GM10248 (cell line): ENCODE measurements at regions of chr15 and their contacts with region 1.

Region 1: GRCh38 chr15:52912169-52912568 is 122.0 kb upstream of the ONECUT1 start:
- DNase-seq: no peak
- CTCF ChIP-seq: no peak

Region 2: DNA sequence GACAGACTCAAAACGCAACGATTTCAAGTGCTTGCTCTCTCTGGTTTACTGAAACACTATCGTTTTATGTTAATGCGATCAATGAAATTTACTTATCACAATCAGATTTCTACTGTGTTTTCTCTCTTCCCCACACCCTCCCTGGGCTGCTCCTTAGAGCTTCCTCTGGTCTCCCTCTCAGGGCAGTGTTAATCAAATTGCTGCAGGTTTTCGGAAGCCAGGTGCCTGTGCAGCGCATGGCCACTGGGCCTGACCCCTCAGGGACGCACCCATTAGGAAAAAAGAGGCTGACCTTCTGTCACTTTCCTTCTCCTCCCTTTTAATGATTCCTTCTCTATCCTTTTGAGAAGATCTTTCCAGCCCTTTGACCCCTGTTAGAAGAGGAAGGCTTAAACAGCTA is 12.5 kb after region 1 on chr15:
- CTCF ChIA-PET with region 1: interaction called, 15 read pairs
- POLR2A ChIA-PET with region 1: no interaction called
- DNase-seq: no peak
- CTCF ChIP-seq: no peak